ENCODE measurements at regions of chr5 and their contacts with region 1.

Region 1: DNA sequence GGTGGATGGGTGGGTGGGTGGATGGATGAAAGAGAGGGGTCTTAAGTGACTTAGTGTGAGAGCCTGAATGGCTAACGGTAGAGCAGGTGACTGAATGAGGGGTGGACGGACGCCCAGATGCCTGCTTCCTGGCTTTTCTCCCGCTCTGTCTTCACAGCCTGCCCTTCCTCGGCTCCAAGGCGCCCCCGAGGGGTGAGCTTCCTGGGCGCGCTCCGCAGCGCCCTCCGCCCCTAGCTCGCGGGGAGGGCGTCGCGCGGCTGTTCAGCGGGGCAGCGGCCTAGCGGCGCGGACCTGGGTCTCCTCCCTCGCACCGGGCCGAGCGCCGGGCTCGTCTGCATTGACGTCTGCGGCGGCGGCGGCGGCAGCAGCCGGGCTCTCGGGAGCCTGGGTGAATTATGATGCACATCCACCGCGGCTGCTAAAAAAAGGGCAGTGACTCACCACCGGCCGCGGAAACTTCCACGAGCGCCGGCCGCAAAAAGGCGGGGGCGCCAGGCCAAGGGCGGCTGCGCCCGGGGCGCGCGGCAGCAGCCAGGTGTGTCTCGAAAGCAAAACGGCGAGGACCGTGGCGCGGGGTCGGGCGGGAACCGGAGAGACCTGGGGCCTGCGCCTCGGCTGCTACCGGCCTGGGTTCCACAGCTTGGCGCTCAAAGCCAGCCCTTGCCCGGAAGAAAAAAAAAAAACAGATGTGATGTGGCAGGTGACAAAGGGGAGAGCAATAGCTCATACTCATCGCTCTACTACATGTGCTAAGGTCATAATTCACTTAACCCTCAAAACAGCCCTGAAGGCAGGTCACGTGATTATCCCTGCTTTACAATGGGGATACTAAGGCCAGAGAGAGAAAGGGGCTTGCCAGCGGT is 143.0 kb upstream of the ADRA1B start:
- DNase-seq: peak; percentile 89

Region 2: DNA sequence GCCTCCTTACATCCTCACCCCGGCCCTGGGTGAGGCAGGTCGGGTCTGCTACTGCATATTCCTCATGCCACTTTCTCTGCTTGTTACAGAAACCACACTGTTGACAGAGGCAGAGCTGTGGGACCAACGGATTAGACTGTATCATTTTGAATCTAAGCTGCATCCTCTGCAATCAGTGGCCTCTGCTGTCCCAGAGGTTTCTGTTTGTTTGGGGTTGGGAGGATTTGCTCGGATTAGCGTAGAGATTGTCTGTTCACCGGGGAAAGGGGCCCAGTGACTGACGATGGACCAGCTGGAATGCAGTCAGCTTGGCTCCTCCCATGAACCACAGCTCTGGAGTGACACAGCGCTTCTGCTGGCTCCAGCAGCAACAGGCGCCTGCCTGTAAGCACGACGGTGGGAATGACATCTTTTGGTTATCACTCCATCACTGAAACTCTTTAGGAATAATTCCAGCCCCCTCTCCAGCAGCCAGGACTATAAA is 105.7 kb after region 1 on chr5:
- intact Hi-C with region 1: loop called (anchors 5 kb)
- DNase-seq: no peak

Region 3: DNA sequence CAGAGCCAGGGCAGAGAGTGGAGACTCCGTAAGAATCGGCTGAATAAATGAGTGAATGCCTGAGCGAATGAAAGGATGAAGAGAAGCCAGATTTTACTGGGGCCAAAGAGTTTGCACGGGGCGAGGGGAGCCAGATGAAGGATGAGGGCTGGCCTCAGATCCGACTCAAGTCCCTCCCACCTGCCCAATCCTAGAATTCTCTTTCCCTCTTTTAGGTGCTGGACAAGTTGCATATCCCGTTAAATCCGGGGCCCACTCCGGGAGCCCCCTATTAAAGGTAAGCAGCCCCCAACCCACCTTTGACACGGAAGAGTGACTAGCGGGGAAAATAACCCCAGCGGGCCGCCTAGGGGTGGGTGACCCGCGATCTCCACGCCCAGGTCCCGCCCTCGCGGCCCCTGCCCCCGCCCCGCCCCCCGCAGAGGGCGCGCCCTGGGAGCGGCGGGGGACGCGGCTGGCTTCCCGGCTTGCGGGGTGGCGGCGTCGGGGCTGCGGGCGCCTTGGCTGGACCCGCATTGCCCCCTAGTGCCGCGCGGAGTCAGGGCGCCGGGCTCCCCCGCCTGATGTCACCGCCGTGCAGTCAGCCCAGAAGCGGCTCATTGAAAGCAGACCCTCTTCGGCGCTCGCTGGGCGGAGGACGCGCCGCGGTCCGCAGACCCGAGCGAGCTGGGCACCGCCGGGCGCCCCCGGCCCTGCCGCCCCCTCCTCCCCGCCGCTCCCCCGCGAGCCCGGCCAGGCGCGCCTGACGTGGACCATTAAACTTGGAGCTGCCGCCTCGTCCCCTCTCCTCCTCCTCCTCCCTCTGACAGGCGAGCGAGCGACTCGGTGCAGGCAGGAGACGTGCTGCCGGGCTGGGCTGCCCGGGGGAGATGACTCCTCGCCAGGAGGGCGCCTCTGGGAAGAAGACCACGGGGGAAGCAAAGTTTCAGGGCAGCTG is 142.9 kb after region 1 on chr5 and contains the start of gene ADRA1B:
- intact Hi-C with region 1: loop called (anchors 5 kb)
- DNase-seq: peak; percentile 84
- total RNA-seq, gene ADRA1B: 4.9 TPM

Measured in cardiac septum (tissue), 1 donor.